Mammary epithelial cell (primary cell): ENCODE measurements at regions of chr13 and their contacts with region 1.

Region 1: GRCh38 chr13:93227878-93228642 is 1.5 kb downstream of the GPC6 start:
- DNase-seq: peak; percentile 90
- H3K4me3 ChIP-seq: peak overlapping the region; percentile 45 to 92 (median 84)
- H3K27ac ChIP-seq: peak overlapping the region; percentile 46
- H3K4me1 ChIP-seq: peaks cover 20% of the 10 kb centered on the region
- H3K27me3 ChIP-seq: no peaks in the 10 kb centered on the region
- CTCF ChIP-seq: peak; percentile 24 to 69

Region 2: DNA sequence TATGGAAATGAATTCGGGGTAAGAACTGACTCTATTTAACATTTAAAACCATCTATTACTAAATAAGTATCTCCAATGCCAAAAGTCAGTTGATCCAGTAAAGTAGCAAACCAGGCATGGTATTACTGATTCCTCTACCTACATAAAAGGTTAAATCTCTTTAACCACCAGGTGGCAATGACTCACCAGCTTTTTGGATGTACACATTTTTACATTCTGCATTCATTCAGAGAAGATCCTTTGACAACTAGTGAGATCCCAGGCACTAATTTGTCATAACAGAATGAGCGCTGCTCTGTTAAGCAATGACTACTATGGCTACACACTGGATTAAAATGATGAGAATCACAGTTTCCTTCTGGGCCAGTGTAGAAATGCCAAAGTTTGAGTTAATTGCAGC is 331.2 kb before region 1 on chr13:
- CTCF ChIA-PET with region 1: no interaction called
- dilution Hi-C with region 1: no loop called
- in situ Hi-C with region 1: no loop called
- intact Hi-C with region 1: loop called (anchors 2 kb)
- DNase-seq: peak; percentile 58
- H3K4me3 ChIP-seq: no peak overlapping the region
- H3K27ac ChIP-seq: no peak overlapping the region
- H3K4me1 ChIP-seq: no peaks in the 10 kb centered on the region
- H3K27me3 ChIP-seq: peaks cover 4% of the 10 kb centered on the region
- CTCF ChIP-seq: peak; percentile 39 to 43

Region 3: DNA sequence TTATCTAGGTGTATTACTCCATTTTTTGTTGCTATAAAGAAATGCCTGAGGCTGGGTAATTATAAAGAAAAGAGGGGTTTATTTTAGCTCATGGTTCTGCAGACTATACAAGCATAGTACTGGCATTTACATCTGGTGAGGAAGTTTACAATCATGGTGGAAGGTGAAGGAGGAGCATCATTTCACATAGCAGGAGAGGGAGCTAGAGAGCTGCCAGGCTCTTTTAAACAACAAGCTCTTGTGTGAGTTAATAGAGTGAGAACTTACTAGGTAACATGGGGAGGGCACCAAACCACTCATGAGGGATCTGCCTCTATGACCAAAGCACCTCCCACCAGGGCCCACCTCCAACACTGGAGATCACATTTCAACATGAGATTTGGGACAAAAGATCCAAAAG is 223.1 kb before region 1 on chr13:
- CTCF ChIA-PET with region 1: interaction called, 3 read pairs
- dilution Hi-C with region 1: no loop called
- in situ Hi-C with region 1: no loop called
- intact Hi-C with region 1: loop called (anchors 5 kb)
- DNase-seq: peak; percentile 25
- H3K4me3 ChIP-seq: no peak overlapping the region
- H3K27ac ChIP-seq: no peak overlapping the region
- H3K4me1 ChIP-seq: no peaks in the 10 kb centered on the region
- H3K27me3 ChIP-seq: no peaks in the 10 kb centered on the region
- CTCF ChIP-seq: peak; percentile 20 to 59

Region 4: GRCh38 chr13:93116809-93117208 is 111.3 kb before region 1 on chr13:
- CTCF ChIA-PET with region 1: no interaction called
- dilution Hi-C with region 1: no loop called
- in situ Hi-C with region 1: no loop called
- intact Hi-C with region 1: no loop called
- DNase-seq: no peak
- H3K4me3 ChIP-seq: no peak overlapping the region
- H3K27ac ChIP-seq: no peak overlapping the region
- H3K4me1 ChIP-seq: no peaks in the 10 kb centered on the region
- H3K27me3 ChIP-seq: no peaks in the 10 kb centered on the region
- CTCF ChIP-seq: peak; percentile 8 to 14

Region 5: DNA sequence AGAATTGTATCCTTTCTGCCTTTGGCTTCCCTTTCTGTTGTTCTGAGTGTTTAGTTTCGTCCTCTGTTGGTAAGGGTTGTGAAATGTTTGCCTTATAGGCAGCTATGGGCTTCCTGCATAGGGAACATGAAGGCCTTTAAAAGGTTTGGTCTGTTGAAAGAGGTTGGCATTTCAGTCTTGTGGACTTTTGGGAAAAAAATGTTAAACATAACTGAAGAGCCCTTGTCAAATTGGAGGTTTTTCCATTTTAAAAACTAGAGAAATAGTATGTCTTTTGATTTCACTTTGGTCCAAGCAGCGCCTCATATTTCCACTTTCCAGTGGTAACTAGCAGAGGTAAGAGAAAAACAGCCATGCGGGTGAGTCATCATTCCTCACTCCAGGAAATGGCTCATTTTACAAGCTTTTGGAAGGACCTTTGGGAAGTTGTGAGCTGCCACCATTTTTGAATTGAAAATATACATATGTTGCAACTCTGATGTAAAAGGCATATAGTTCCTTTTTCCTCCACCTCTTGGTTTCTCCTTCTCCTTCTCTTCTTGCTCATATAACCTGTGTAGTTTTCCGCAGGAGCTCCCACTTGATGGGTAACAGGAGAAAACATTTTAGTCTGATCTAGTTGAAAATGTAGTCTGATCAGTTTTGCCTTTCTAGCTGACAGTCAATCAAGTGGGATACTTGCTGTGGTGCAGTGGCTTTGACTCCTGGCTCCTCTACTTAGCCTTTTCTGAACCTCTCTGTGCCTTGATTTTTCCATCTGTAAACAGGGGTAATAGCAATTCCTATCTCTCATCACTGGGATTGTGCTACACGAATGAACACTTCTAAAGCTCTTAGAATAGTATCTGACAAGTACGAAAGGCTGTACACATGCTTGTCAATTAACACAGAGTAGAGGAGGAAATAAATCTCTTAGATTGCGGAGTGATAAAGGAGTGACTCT is 21.6 kb after region 1 on chr13:
- CTCF ChIA-PET with region 1: no interaction called
- dilution Hi-C with region 1: no loop called
- in situ Hi-C with region 1: no loop called
- intact Hi-C with region 1: no loop called
- DNase-seq: peak; percentile 84
- H3K4me3 ChIP-seq: no peak overlapping the region
- H3K27ac ChIP-seq: peak overlapping the region; percentile 80
- H3K4me1 ChIP-seq: peaks cover 22% of the 10 kb centered on the region
- H3K27me3 ChIP-seq: no peaks in the 10 kb centered on the region
- CTCF ChIP-seq: no peak

Region 6: DNA sequence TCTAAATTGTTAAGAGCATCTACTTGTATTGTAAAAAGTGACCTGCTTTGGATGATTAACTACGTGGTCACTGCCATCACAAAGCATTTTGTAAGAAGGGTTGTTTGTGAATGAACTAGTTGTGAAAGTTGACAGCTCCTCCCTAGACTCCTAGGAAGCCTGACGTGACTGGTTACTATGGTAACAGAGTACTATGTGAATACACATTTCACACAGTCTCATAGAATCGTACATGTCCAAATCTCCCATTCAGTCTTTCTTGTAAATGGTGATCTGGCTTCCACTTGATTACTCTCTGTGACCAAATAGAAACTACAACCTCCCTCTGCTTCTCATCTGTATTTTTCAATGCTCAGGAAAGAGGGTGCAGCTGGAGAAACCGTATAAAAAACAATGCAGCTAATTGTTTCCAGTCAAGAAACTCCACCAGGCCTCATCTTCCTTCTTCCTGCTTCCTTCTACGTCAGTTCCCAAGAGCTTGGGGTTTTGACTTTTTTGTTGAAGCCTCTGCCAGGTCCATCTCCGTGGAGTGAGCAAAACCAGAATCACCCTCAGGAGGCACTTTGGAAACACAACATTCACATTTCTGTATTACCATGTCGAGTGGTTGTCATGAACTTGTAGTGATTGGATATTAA is 81.9 kb after region 1 on chr13:
- CTCF ChIA-PET with region 1: interaction called, 3 read pairs
- dilution Hi-C with region 1: no loop called
- in situ Hi-C with region 1: no loop called
- intact Hi-C with region 1: loop called (anchors 5 kb)
- DNase-seq: peak; percentile 90
- H3K4me3 ChIP-seq: no peak overlapping the region
- H3K27ac ChIP-seq: no peak overlapping the region
- H3K4me1 ChIP-seq: no peaks in the 10 kb centered on the region
- H3K27me3 ChIP-seq: no peaks in the 10 kb centered on the region
- CTCF ChIP-seq: no peak

Region 7: GRCh38 chr13:93603043-93603442 is 375.0 kb after region 1 on chr13:
- CTCF ChIA-PET with region 1: no interaction called
- dilution Hi-C with region 1: no loop called
- in situ Hi-C with region 1: no loop called
- intact Hi-C with region 1: loop called (anchors 2 kb)
- DNase-seq: peak; percentile 86
- H3K4me3 ChIP-seq: no peak overlapping the region
- H3K27ac ChIP-seq: no peak overlapping the region
- H3K4me1 ChIP-seq: peaks cover 10% of the 10 kb centered on the region
- H3K27me3 ChIP-seq: no peaks in the 10 kb centered on the region
- CTCF ChIP-seq: no peak

Region 8: GRCh38 chr13:93951153-93951552 is 723.1 kb after region 1 on chr13:
- CTCF ChIA-PET with region 1: no interaction called
- dilution Hi-C with region 1: no loop called
- in situ Hi-C with region 1: no loop called
- intact Hi-C with region 1: loop called (anchors 10 kb)
- DNase-seq: no peak
- H3K4me3 ChIP-seq: no peak overlapping the region
- H3K27ac ChIP-seq: no peak overlapping the region
- H3K4me1 ChIP-seq: no peaks in the 10 kb centered on the region
- H3K27me3 ChIP-seq: no peaks in the 10 kb centered on the region
- CTCF ChIP-seq: peak in 1 of 2 donors; percentile 7

Region 9: GRCh38 chr13:94362411-94362909 is 1134.4 kb after region 1 on chr13:
- CTCF ChIA-PET with region 1: no interaction called
- dilution Hi-C with region 1: no loop called
- in situ Hi-C with region 1: no loop called
- intact Hi-C with region 1: loop called (anchors 5 kb)
- DNase-seq: peak; percentile 67
- H3K4me3 ChIP-seq: no peak overlapping the region
- H3K27ac ChIP-seq: no peak overlapping the region
- H3K4me1 ChIP-seq: no peaks in the 10 kb centered on the region
- H3K27me3 ChIP-seq: no peaks in the 10 kb centered on the region
- CTCF ChIP-seq: peak; percentile 84 to 91